Left ventricle myocardium superior (tissue), 1 donor: ENCODE measurements at regions of chr4 and their contacts with region 1.

Region 1: DNA sequence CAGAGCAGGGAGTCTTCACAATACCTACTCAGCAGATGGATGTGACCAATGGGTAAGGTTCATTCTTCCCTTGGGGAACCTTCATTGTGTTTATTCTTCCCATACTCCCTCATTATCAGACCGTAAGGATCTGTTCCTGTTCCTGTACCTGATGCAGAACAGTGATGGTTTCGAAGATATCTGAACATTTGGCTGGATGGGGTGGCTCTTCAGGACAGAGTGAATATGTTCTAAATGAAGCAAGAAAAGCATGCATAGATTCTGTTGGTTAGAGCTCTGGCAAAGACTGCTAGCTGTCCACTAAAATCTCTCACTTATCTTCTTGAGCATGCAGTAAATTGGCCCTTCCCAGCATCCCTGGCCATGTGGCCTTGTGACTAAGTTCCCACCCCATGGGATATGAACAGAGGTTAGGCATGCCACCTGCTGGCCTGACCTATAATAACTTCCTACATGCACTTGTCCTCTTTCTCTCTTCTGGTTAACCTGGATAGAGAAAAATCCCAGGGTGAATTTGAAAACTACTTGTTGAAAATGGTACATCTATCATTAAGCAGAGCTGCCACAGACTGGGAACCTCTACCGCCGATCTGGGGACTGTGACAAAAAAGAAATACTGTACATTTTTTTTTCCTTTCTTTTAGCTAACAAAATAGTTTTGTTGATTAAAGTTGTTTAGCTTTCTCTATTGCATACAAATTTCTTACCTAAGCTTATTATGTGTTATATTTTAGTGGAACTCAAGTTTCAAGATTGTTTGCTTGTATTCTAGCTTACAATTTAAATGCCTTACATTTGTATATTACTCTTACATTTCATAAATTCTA is 60.0 kb upstream of the BANK1 start:
- DNase-seq: peak; percentile 52
- ATAC-seq: peak; percentile 89

Region 2: DNA sequence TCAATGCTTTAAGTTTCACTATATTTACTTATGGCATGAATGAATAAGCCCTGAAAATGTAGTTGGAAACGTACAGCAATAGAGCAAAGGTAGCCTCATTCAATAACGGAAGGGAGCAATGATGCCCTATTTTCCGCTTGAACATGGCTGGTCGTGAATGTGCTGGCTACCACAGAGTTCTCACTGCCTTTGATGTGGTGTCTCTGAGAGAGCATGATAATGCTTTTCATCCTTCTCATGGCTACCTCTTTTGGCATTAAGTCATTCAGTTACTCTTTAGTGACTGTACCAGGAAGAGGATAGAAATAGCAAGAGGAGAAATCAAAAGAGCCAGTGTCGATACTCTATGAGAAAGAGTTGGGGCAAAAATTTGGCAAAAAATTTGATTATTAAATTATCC is 691.1 kb before region 1 on chr4:
- intact Hi-C with region 1: no loop called
- DNase-seq: no peak
- ATAC-seq: no peak

Region 3: DNA sequence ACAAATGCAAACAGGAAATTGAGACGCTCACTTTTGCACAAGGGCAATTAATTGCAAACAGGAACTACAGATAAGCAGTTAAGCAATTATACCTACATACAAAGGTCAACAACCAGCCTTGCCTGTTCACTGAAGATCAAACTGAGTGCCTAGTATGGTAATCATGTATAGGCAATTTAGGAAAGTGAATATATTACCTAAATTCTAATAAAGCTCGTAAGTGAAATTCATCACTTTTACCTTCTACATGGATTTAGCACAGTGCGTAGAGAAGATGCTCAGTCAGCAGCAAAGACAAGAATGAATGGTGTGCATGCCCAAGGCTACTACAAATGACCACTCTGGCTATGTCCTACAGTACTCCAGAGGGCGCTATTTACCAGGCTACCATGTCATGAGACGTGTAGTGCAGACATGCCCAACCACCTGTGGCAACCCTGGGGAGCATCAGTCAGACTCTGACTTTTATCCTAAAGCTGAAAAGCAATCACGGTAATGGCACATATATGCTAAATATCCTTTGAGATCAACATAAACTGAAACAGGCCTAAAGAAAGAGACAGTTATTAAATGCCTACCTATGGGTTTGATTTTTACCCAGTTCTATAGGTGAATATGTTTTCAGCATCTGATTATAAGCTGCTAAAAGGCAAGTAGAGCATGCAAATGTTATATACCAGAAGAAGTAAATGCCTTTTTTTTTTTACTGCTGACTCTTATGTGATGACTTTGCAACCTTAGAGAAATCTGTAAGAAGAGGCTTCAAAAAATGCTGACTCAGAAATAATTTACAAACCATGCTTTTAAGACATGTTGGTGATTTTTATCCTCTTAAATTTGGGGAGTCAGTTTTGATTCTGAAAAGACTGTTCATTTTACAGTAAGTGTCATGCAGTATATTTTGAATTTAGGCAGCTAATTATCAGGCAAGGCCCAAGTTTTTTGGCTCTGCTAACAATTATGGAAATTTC is 561.2 kb before region 1 on chr4:
- intact Hi-C with region 1: loop called (anchors 2 kb)
- DNase-seq: peak; percentile 31
- ATAC-seq: peak; percentile 96